Spleen (tissue), 13 donors: ENCODE measurements at regions of chr9 and their contacts with region 1.

Region 1: DNA sequence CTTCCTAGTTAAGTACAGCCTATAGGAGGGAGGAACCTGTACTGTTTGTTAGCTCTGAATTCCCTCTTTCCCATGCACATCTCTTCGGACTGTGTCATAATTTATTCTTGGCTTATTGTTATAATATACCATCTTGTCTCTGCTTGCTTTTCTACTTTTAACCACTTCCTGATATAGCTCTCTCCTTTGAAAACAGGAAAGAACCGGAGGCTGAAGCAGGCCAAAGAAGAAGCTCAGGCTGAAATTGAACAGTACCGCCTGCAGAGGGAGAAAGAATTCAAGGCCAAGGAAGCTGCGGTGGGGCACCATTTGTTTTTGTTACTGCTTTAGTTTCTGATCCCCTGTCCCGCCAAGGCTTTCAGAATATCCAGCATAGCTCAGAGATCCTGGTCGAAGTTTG is 4.8 kb downstream of the ATP6V1G1 start:
- DNase-seq: no peak
- H3K4me3 ChIP-seq: peak overlapping the region in 3 of 8 donors; percentile 17 to 87 (median 25)
- H3K27ac ChIP-seq: peak overlapping the region; percentile 61 to 94 (median 74)
- H3K4me1 ChIP-seq: peaks cover 48 to 86% (median 60%) of the 10 kb centered on the region in 6 donors
- H3K27me3 ChIP-seq: no peaks in the 10 kb centered on the region
- CTCF ChIP-seq: peak in 10 of 11 experiments; percentile 33 to 72 (median 58)
- POLR2A ChIP-seq: no peak

Region 2: DNA sequence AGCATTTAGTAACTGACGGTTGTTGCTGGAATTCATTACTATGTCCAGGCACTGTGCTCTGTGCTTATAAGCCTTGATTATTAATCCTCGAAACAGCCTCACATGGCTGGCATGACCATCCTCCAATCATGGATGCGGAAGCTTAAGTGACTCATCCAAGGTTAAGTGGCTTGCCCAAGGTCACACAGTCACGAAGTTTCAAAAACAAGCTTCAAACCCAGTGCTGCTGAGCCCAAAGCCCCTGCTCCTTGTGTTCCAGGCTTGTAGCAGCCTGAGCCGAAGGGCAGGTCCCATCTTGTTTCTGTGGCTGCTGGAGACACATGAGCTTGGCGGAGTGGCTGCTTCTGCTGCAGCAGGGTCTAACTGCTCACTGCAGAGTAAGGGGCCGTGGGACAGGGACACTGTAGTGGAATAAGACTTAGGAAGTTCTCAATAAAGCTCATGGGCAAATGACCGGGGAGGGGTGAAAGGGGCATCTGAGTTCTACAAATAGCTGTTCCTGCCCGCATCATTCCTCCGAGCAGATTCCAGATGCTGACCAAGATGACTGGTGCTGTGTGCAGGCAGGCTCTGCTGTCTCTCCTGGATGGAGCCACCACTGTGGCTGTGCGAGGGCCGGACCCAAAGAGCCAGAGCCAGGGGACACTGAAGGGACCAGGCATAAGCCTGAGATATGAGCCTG is 119.5 kb before region 1 on chr9:
- intact Hi-C with region 1: no loop called
- DNase-seq: no peak
- H3K4me3 ChIP-seq: no peak overlapping the region
- H3K27ac ChIP-seq: no peak overlapping the region
- H3K4me1 ChIP-seq: peaks cover 0 to 35% (median 19%) of the 10 kb centered on the region in 6 donors
- H3K27me3 ChIP-seq: no peaks in the 10 kb centered on the region
- CTCF ChIP-seq: no peak
- POLR2A ChIP-seq: no peak

Region 3: GRCh38 chr9:114641967-114642366 is 49.6 kb after region 1 on chr9:
- intact Hi-C with region 1: loop called (anchors 10 kb)
- DNase-seq: no peak
- H3K4me3 ChIP-seq: no peak overlapping the region
- H3K27ac ChIP-seq: peak overlapping the region in 2 of 8 donors; percentile 5 to 13
- H3K4me1 ChIP-seq: peaks cover 0 to 21% (median 6%) of the 10 kb centered on the region in 6 donors
- H3K27me3 ChIP-seq: no peaks in the 10 kb centered on the region
- CTCF ChIP-seq: no peak
- POLR2A ChIP-seq: no peak

Region 4: GRCh38 chr9:114655689-114656088 is 63.3 kb after region 1 on chr9:
- intact Hi-C with region 1: no loop called
- DNase-seq: no peak
- H3K4me3 ChIP-seq: no peak overlapping the region
- H3K27ac ChIP-seq: no peak overlapping the region
- H3K4me1 ChIP-seq: peaks cover 0 to 20% (median 10%) of the 10 kb centered on the region in 6 donors
- H3K27me3 ChIP-seq: no peaks in the 10 kb centered on the region
- CTCF ChIP-seq: no peak
- POLR2A ChIP-seq: no peak

Region 5: DNA sequence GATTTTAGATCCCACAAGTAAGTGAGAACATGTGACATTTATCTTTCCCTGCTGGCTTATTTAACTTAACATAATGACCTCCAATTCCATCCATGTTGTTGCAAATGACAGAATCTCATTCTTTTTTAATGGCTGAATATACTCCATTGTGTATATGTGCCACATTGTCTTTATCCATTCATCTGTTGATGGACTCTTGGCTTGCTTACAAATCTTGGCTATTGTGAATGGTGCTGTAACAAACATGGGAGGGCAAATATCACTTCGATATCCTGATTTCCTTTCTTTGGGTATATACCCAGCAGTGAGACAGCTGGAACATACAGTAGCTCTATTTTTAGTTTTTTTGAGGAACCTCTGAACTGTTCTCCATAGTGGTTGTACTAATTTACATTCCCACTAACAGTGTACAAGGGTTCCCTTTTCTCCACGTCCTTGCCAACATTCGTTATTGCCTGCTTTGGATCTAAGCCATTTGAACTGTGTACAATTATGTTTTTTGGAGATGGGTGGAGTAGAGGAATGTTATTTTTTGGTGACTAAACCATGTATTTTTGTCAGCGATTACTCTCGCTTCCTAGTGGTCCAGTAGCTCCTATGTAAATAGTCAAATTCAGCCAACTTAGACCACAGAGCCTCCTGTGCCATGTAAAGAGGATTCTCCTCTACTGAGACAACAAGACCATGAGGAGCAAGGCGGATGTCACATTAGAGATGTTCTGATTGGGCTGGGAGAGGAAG is 152.9 kb after region 1 on chr9:
- intact Hi-C with region 1: no loop called
- DNase-seq: no peak
- H3K4me3 ChIP-seq: no peak overlapping the region
- H3K27ac ChIP-seq: no peak overlapping the region
- H3K4me1 ChIP-seq: no peaks in the 10 kb centered on the region
- H3K27me3 ChIP-seq: no peaks in the 10 kb centered on the region
- CTCF ChIP-seq: no peak
- POLR2A ChIP-seq: no peak